ENCODE measurements at regions of chrX and their contacts with region 1.

Region 1: DNA sequence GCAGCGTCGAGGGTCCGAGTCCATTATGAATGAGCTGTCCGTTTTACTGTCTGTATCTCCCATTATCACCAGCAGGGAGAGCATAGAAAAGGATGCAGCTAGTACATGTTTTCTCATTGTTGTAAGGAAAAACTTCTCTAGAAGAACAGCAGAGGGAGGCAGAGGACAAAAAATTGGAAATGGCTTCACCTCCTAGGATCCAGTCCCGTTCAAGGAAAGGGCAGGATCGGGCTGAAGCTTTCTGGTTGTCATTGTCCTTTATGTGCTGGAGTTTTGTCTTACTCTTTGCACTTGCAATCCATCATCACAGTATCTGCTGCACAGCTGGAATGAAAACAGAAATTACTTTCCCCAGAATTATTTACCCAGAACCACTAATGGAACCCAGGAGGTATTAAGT is 14.7 kb downstream of the NDP start:
- DNase-seq: peak; percentile 22
- H3K4me3 Mint-ChIP-seq: no peak overlapping the region
- H3K27ac Mint-ChIP-seq: no peak overlapping the region
- H3K4me1 Mint-ChIP-seq: peaks cover 5% of the 10 kb centered on the region
- H3K27me3 Mint-ChIP-seq: peaks cover 5% of the 10 kb centered on the region

Region 2: GRCh38 chrX:44244008-44244407 is 285.5 kb after region 1 on chrX:
- CTCF ChIA-PET with region 1: interaction called, 22 read pairs
- DNase-seq: no peak
- H3K4me3 Mint-ChIP-seq: no peak overlapping the region
- H3K27ac Mint-ChIP-seq: no peak overlapping the region
- H3K4me1 Mint-ChIP-seq: peaks cover 30% of the 10 kb centered on the region
- H3K27me3 Mint-ChIP-seq: no peaks in the 10 kb centered on the region